Activated CD4-positive, alpha-beta T cell treated with anti-CD3 and anti-CD28 coated beads, Interleukin-2, amount 10 ng/mL, durations not matched to agents 24 days and 14 days (primary cell): ENCODE measurements at regions of chr2 and their contacts with region 1.

Region 1: GRCh38 chr2:241315093-241315878 is at the start of gene HDLBP:
- DNase-seq: peak; percentile 100
- H3K4me3 Mint-ChIP-seq: peak within 1 kb of the TSS; percentile 100
- H3K27ac Mint-ChIP-seq: peak within 1 kb of the TSS; percentile 100
- H3K4me1 Mint-ChIP-seq: peaks cover 53% of the 10 kb centered on the region
- H3K27me3 Mint-ChIP-seq: no peaks in the 10 kb centered on the region
- total RNA-seq, gene HDLBP: 266 and 270 TPM in 2 replicates

Region 2: DNA sequence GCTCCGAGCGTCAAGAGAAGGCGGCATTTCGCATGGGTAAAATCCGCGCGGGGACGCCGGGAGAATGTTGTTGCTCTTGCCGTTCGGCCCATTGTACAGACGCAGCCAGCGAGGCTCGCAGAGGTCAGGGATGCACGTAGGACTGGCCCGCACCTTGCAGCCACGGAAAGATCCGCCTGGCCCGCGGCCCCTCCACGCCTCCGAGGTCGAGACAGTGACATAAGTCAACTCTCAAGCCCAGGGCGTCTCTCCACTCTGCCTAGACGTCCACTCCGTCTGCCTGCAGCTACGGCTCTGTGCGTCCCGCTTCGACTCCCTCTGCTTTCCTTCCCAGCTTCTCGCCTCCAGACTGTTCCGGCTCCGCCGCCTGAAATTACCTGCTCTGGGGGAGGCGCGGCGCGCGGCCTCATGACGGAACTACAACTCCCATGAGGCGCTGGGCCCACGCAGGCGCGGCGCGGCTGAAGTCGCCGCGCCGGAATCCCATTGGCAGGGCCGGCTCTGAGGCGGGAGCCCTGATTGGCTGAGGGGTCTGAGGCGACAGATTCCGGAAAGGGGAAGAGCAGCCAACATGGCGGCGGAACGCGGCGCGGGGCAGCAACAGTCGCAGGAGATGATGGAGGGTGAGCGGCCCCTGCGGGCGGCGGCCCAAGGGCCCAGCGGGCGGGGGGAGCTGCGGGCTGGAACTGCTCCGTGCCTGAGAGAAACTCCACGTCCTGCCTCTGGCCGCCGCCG is 165.2 kb before region 1 on chr2 and contains the start of gene PPP1R7:
- intact Hi-C with region 1: loop called (anchors 1 kb)
- DNase-seq: peak; percentile 98
- H3K4me3 Mint-ChIP-seq: peak within 1 kb of the TSS; percentile 96
- H3K27ac Mint-ChIP-seq: peak within 1 kb of the TSS; percentile 97
- H3K4me1 Mint-ChIP-seq: peaks cover 49% of the 10 kb centered on the region
- H3K27me3 Mint-ChIP-seq: no peaks in the 10 kb centered on the region
- total RNA-seq, gene PPP1R7: 111 and 113 TPM in 2 replicates

Region 3: GRCh38 chr2:241329669-241330615 is 14.7 kb after region 1 on chr2:
- intact Hi-C with region 1: no loop called
- DNase-seq: no peak
- H3K4me3 Mint-ChIP-seq: no peak overlapping the region
- H3K27ac Mint-ChIP-seq: no peak overlapping the region
- H3K4me1 Mint-ChIP-seq: peaks cover 12% of the 10 kb centered on the region
- H3K27me3 Mint-ChIP-seq: no peaks in the 10 kb centered on the region

Region 4: GRCh38 chr2:241339839-241340630 is 24.7 kb after region 1 on chr2:
- intact Hi-C with region 1: loop called (anchors 2 kb)
- DNase-seq: no peak
- H3K4me3 Mint-ChIP-seq: no peak overlapping the region
- H3K27ac Mint-ChIP-seq: no peak overlapping the region
- H3K4me1 Mint-ChIP-seq: peaks cover 32% of the 10 kb centered on the region
- H3K27me3 Mint-ChIP-seq: no peaks in the 10 kb centered on the region

Region 5: DNA sequence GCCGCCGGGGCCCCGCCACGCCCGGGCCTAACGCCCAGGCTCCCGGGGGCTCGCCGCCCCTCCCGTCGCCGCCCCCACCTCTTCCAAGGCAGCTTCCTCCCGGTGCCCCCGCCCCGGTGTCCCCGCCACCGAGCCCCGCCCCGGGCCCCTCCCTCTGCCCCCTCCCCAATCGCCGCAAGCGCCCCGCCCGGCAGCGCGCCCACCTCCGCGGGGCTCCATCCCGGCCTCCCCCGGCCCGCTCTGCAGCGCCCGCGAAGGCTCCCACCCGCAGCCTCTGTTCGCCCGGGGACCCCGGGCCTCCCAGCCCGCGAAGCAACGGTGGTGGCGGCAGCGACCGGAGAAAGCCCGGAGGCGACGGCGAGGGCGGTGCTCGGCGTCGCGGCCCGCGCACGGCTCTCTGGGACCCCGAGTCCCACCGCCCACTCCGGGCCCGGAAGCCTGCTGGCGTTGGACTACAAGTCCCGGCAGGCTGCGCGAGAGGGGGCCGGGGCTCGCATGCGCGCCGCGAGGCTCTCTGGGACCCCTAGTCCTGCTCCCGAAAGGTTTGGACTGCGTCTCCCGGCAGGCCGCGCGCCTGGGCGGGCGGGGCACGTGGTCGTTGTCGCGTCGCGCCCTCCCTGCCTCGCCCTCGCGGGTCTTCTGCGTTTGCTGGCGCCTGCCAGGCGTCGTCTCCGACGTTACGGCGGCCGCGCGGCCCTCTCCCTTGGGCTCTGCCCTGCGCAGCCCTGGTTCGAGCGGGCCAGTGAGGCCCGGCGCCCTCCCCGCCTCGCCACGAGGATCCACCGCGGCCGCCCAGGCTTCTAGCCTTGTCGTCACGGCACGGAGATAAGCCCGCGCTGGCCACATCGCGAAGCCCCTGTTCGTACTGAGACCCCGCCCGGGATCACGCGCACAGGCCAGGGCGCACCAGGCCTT is 193.2 kb after region 1 on chr2 and contains the start of gene STK25:
- intact Hi-C with region 1: loop called (anchors 1 kb)
- DNase-seq: peak; percentile 99
- H3K4me3 Mint-ChIP-seq: peak within 1 kb of the TSS; percentile 87
- H3K27ac Mint-ChIP-seq: peak within 1 kb of the TSS; percentile 72
- H3K4me1 Mint-ChIP-seq: peaks cover 13% of the 10 kb centered on the region
- H3K27me3 Mint-ChIP-seq: peaks cover 7% of the 10 kb centered on the region
- total RNA-seq, gene STK25: 121 and 145 TPM in 2 replicates

Region 6: DNA sequence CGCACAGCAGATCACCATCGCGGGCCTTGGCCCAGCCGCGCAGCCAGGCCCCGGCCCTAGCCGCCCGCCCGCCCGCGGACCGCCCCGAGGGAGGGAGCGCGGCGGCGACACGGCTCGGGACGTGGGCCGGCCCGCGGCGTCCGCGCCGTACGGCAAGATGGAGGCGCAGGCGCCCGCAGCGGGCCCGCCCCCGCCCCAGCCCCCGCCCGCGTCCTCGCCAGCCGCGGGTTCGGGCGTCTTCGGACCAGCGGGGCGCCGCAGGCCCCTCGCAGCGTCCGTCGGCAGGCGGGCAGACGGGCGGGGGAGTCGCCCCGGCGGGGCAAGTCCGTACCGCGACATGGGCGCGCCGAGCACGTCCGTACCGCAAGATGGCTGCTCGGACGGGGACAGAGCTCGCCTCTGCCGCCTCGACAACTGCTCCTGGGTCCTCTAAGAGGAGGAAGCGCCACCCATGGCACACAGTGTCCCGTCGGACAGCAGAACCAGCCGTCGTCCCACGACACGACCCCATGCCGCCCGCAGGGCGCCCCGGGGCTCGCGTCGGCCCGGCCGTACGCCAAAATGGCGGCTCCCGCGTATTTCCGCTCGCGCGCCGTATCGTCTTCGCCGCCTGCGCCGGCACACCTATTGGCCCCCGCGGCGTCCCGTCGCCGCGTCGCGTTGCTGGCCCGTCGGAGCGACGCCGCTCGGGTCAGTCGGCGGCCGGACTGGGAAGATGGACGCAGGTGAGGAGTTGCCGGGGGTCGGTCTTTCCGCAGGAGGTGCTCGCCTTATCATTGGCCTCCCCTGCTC is 321.9 kb after region 1 on chr2 and contains the starts of genes ATG4B and THAP4:
- intact Hi-C with region 1: loop called (anchors 1 kb)
- DNase-seq: peak; percentile 95
- H3K4me3 Mint-ChIP-seq: peak within 1 kb of the TSS; percentile 89
- H3K27ac Mint-ChIP-seq: peak within 1 kb of the TSS; percentile 93
- H3K4me1 Mint-ChIP-seq: peaks cover 41% of the 10 kb centered on the region
- H3K27me3 Mint-ChIP-seq: no peaks in the 10 kb centered on the region
- total RNA-seq, gene ATG4B: 109 and 115 TPM in 2 replicates
- total RNA-seq, gene THAP4: 62.0 and 63.9 TPM in 2 replicates

Region 7: GRCh38 chr2:241702132-241703031 is 387.1 kb after region 1 on chr2:
- intact Hi-C with region 1: loop called (anchors 1 kb)
- DNase-seq: peak; percentile 95
- H3K4me3 Mint-ChIP-seq: peak overlapping the region; percentile 91
- H3K27ac Mint-ChIP-seq: peak overlapping the region; percentile 79
- H3K4me1 Mint-ChIP-seq: peaks cover 15% of the 10 kb centered on the region
- H3K27me3 Mint-ChIP-seq: no peaks in the 10 kb centered on the region